Right cardiac atrium (tissue), 5 donors: ENCODE measurements at regions of chr9 and their contacts with region 1.

Region 1: GRCh38 chr9:128921881-128922763 is 1.3 kb downstream of the PHYHD1 start:
- DNase-seq: peak; percentile 69 to 88 (median 87)
- ATAC-seq: peak; percentile 77 to 80
- H3K4me3 ChIP-seq: peak overlapping the region; percentile 54
- H3K27ac ChIP-seq: peak overlapping the region; percentile 84
- H3K4me1 ChIP-seq: peaks cover 2% of the 10 kb centered on the region
- H3K27me3 ChIP-seq: no peaks in the 10 kb centered on the region

Region 2: DNA sequence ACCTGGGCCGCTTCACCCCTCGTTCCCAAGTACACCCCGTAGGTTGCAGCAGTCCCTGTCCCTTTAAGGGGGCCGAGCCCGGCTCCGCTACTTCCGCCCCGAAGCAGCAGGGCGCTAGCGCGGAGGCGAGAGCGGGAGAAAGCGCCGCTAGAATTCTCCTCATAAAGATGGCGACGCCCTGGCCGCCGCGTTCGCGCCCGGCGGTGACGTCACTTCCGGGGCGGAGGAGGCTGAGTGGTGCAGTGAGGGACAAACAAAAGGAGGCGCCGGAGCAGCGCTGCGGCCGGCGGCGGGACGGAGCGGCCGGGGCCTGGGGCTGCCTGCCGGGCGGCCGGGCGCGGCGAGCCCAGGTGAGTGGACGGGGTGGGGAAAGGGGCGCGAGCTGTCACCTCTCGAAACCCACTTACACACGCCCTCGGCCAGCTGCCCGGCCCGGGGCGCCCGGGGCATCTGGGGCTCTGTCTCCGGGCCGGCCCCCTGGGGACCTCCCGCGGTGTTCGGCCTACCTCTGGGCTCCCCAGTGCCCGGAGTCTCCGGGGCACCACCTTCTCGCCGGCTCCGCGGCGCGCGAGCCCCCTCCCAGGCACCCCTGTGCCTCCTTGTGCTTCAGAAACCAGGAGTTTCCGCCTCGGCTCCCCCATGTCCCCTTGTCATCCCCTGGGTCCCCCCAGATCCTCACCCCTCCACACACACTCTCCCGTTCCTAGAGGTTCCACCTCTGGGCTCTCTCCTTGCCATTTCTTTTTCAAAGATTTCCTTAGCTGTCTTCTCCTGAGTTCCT is 40.0 kb before region 1 on chr9 and contains the starts of genes KYAT1 and LRRC8A:
- intact Hi-C with region 1: loop called in 3 of 4 experiments (anchors 5 kb)
- DNase-seq: peak; percentile 98 to 99 (median 99)
- ATAC-seq: peak; percentile 91
- H3K4me3 ChIP-seq: peak within 1 kb of the TSS; percentile 90
- H3K27ac ChIP-seq: peak within 1 kb of the TSS; percentile 97
- H3K4me1 ChIP-seq: peaks cover 16% of the 10 kb centered on the region
- H3K27me3 ChIP-seq: no peaks in the 10 kb centered on the region
- total RNA-seq, gene KYAT1: 10.1 to 18.0 (median 14.0) TPM
- total RNA-seq, gene LRRC8A: 22.5 to 49.8 (median 26.3) TPM